Gastrocnemius medialis (tissue), 4 donors: ENCODE measurements at regions of chr13 and their contacts with region 1.

Region 1: GRCh38 chr13:99501184-99501847 is at the start of gene TM9SF2:
- DNase-seq: peak; percentile 94 to 97
- ATAC-seq: peak; percentile 76 to 83
- H3K4me3 ChIP-seq: peak within 1 kb of the TSS; percentile 74 to 99 (median 84)
- H3K27ac ChIP-seq: peak within 1 kb of the TSS; percentile 90 to 94 (median 92)
- H3K4me1 ChIP-seq: peaks cover 63 to 64% of the 10 kb centered on the region in 2 donors
- H3K27me3 ChIP-seq: no peaks in the 10 kb centered on the region
- CTCF ChIP-seq: peak in 1 of 5 experiments; percentile 12
- POLR2A ChIP-seq: peak; percentile 61 to 70
- total RNA-seq, gene TM9SF2: 47.3 to 69.9 (median 55.7) TPM

Region 2: GRCh38 chr13:98576963-98577822 is 924.1 kb before region 1 on chr13 and contains the start of gene STK24:
- in situ Hi-C with region 1: no loop called
- intact Hi-C with region 1: loop called (anchors 10 kb)
- DNase-seq: peak; percentile 35 to 57
- ATAC-seq: peak; percentile 73 to 80
- H3K4me3 ChIP-seq: peak within 1 kb of the TSS; percentile 78 to 94 (median 89)
- H3K27ac ChIP-seq: peak within 1 kb of the TSS; percentile 95 to 97 (median 96)
- H3K4me1 ChIP-seq: peaks cover 24 to 42% of the 10 kb centered on the region in 2 donors
- H3K27me3 ChIP-seq: no peaks in the 10 kb centered on the region
- CTCF ChIP-seq: no peak
- POLR2A ChIP-seq: peak; percentile 56 to 65
- total RNA-seq, gene STK24: 28.7 to 68.4 (median 49.4) TPM

Region 3: DNA sequence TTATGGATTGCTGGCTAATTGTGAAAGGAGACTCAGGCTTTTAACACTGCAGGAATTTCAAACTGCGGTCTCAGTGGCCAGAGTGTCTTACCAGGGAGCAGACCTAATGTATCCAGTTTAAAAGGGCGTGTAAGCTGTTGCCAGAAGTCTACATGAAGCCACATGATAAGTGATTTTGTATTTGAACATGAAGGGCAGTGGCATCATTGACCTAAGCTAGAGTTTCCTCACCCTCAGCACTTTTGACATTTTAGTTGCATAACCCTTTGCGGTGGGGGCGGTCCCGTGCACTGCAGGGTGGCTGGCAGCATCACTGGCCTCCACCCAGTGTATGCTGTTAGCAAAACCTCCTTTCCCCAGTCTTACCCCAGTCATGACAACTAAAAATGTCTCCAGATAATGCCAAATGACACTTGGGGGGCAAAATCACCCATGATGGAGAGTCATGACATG is 219.5 kb before region 1 on chr13:
- in situ Hi-C with region 1: no loop called
- intact Hi-C with region 1: loop called (anchors 10 kb)
- DNase-seq: peak; percentile 66 to 88
- ATAC-seq: peak; percentile 91 to 96
- H3K4me3 ChIP-seq: no peak overlapping the region
- H3K27ac ChIP-seq: peak overlapping the region; percentile 60 to 78 (median 75)
- H3K4me1 ChIP-seq: peaks cover 45 to 54% of the 10 kb centered on the region in 2 donors
- H3K27me3 ChIP-seq: no peaks in the 10 kb centered on the region
- CTCF ChIP-seq: no peak
- POLR2A ChIP-seq: peak; percentile 25 to 43

Region 4: DNA sequence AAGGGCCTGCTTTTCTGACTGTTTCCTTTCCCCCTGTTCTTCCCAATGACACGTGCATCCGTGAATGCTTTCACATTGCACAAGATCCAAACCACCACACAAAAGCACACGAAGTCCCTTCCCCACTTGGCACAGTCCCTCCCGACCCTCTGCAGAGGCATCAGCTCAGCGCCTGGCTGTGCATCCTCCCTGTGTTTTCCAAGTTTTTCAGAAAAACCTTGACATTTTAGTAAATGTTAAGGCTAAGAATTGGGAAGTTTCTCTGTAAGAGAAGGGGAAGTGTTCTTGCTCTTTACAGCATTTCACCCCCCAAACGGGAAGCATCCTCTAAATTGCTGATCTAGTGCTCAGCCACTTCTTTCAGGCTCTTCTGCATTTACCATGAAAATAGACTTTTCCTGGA is 94.5 kb before region 1 on chr13:
- in situ Hi-C with region 1: no loop called
- intact Hi-C with region 1: no loop called
- DNase-seq: no peak
- ATAC-seq: no peak
- H3K4me3 ChIP-seq: no peak overlapping the region
- H3K27ac ChIP-seq: no peak overlapping the region
- H3K4me1 ChIP-seq: no peaks in the 10 kb centered on the region
- H3K27me3 ChIP-seq: no peaks in the 10 kb centered on the region
- CTCF ChIP-seq: no peak
- POLR2A ChIP-seq: no peak

Region 5: DNA sequence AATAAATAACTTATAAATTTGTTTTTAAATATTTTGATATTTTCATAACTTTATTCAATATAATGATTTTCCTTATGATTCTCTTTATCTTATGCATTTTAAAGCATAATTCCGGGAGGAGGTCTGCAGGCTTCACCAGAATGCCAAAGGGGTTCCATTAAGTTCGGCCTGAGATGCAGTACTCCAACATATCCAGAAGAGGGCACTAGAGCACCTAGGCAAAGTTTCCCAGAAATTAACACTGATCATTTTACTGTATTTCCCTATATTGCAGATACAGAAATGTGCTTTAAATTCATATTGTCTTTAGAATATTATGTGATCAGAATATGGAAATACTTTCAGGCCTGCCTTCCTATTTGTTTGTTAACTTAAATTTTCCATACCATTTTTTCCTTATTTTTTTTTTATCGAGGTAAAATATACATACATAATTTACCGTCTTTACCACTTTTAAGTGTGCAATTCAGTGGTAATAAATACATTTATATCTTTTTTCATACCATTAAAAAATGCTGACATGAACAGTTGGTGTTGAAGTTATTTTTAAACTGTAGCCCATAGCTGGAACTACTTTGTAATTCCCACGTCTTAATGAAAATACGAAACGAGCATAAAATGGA is 58.9 kb before region 1 on chr13:
- in situ Hi-C with region 1: loop called in 1 of 4 experiments (anchors 10 kb)
- intact Hi-C with region 1: loop called (anchors 1 kb)
- DNase-seq: no peak
- ATAC-seq: no peak
- H3K4me3 ChIP-seq: no peak overlapping the region
- H3K27ac ChIP-seq: no peak overlapping the region
- H3K4me1 ChIP-seq: no peaks in the 10 kb centered on the region
- H3K27me3 ChIP-seq: no peaks in the 10 kb centered on the region
- CTCF ChIP-seq: peak; percentile 64 to 96 (median 86)
- POLR2A ChIP-seq: no peak

Region 6: GRCh38 chr13:100088644-100089464 is 587.5 kb after region 1 on chr13 and contains the start of gene PCCA:
- in situ Hi-C with region 1: no loop called
- intact Hi-C with region 1: loop called (anchors 10 kb)
- DNase-seq: peak; percentile 91 to 92
- ATAC-seq: peak; percentile 97 to 98
- H3K4me3 ChIP-seq: peak within 1 kb of the TSS; percentile 77 to 90 (median 82)
- H3K27ac ChIP-seq: peak within 1 kb of the TSS; percentile 74 to 85 (median 83)
- H3K4me1 ChIP-seq: peaks cover 18 to 19% of the 10 kb centered on the region in 2 donors
- H3K27me3 ChIP-seq: no peaks in the 10 kb centered on the region
- CTCF ChIP-seq: peak in 1 of 5 experiments; percentile 1
- POLR2A ChIP-seq: peak; percentile 67
- total RNA-seq, gene PCCA: 7.5 to 19.5 (median 10.8) TPM